Dendritic cell treated with granulocyte-macrophage colony-stimulating factor and Interleukin-4, amounts not matched to agents 40 ng/mL and 50 ng/mL, for 4 days (primary cell): ENCODE measurements at regions of chr4 and their contacts with region 1.

Region 1: GRCh38 chr4:158809611-158810486 is 41.0 kb downstream of the FNIP2 start:
- H3K4me3 Mint-ChIP-seq: peak overlapping the region; percentile 63
- H3K27ac Mint-ChIP-seq: peak overlapping the region; percentile 97
- H3K4me1 Mint-ChIP-seq: peaks cover 79% of the 10 kb centered on the region
- H3K27me3 Mint-ChIP-seq: no peaks in the 10 kb centered on the region

Region 2: DNA sequence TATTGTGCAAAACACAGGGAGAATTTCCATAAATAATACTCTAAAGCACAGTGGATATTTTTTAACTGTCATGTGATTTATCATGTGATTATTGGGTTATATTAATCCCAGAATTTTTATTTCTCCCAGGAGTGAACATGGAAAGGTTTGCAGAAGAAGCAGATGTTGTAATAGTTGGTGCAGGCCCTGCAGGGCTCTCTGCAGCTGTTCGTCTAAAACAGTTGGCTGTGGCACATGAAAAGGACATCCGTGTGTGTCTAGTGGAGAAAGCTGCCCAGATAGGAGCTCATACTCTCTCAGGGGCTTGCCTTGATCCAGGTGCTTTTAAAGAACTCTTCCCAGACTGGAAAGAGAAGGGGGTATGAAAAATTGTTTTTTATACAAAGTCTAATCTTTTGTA is 127.8 kb before region 1 on chr4:
- intact Hi-C with region 1: no loop called
- H3K4me3 Mint-ChIP-seq: no peak overlapping the region
- H3K27ac Mint-ChIP-seq: no peak overlapping the region
- H3K4me1 Mint-ChIP-seq: no peaks in the 10 kb centered on the region
- H3K27me3 Mint-ChIP-seq: no peaks in the 10 kb centered on the region

Region 3: GRCh38 chr4:158766434-158767044 is 43.3 kb before region 1 on chr4:
- intact Hi-C with region 1: loop called (anchors 2 kb)
- H3K4me3 Mint-ChIP-seq: peak overlapping the region; percentile 35
- H3K27ac Mint-ChIP-seq: peak overlapping the region; percentile 94
- H3K4me1 Mint-ChIP-seq: peaks cover 37% of the 10 kb centered on the region
- H3K27me3 Mint-ChIP-seq: peaks cover 4% of the 10 kb centered on the region